Stomach (tissue), 19 donors: ENCODE measurements at regions of chr1 and their contacts with region 1.

Region 1: DNA sequence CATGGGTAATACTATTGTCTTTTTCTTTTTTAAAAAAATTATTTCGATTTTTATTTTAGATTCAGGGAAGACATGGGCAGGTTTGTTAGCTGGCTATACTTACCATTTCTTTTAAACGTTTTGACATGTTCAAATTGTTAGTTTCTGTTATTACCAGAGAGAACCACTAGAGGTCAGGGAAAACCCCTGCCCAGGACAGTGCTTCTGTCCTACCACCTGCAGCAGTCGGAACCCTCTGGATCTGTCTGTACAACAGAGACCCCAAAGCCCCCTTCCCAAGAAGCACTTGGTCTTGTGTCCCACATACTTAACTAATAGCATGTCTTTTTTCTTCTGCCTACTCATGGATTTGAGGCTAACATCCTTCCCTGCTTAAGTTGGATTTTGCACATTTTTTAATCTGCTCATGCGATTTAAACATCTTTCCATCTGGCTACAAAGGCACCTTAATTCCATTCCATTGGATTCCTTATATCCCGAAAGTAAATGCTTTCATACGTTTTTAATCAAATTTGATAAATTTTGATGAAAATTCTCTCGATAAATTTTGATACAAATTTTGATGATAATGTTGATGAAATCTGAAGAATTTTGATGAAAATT is 10.0 kb upstream of the C1orf115 start:
- DNase-seq: peak in 1 of 2 donors; percentile 73
- H3K4me3 ChIP-seq: no peak overlapping the region
- H3K27ac ChIP-seq: no peak overlapping the region
- H3K4me1 ChIP-seq: peaks cover 0 to 12% (median 5%) of the 10 kb centered on the region in 4 donors
- H3K27me3 ChIP-seq: no peaks in the 10 kb centered on the region
- CTCF ChIP-seq: peak in 5 of 7 experiments; percentile 44 to 68 (median 58)
- EP300 ChIP-seq: no peak
- POLR2A ChIP-seq: no peak

Region 2: GRCh38 chr1:220733090-220733601 is 53.0 kb after region 1 on chr1:
- intact Hi-C with region 1: loop called (anchors 10 kb)
- DNase-seq: peak; percentile 73 to 91
- H3K4me3 ChIP-seq: peak overlapping the region in 3 of 4 donors; percentile 5 to 23 (median 6)
- H3K27ac ChIP-seq: peak overlapping the region; percentile 22 to 87 (median 74)
- H3K4me1 ChIP-seq: peaks cover 13 to 30% (median 21%) of the 10 kb centered on the region in 4 donors
- H3K27me3 ChIP-seq: no peaks in the 10 kb centered on the region
- CTCF ChIP-seq: peak in 5 of 7 experiments; percentile 83 to 96 (median 85)
- EP300 ChIP-seq: no peak
- POLR2A ChIP-seq: no peak

Region 3: DNA sequence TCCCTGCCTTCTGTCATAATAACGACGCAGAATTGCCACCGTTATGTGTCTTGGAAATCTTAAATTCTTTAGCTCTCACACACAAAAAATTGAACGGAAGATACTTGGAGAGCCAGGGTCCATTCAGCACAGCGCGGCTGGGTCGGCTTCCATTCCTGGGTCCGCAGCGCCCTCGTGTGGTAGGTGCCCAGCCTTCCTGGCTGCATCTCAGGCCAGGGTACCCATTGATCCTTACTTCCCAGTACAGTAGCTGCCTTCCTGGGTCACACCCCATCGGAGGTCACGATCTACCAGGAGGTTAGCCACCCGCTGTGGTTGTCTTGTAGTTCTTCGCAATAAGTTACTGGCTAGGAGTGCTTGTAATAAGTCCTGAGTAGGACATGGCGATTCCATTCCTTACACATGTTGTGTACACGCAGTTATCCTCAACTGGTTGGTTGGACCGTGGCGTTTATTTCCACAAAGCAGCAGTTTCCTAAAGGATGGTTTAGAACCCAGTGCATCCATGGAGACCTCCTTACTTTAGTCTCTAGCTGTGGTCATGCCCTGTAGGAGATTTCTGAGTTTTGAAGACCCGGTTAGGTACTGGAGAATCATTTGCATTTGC is 96.6 kb after region 1 on chr1:
- intact Hi-C with region 1: loop called (anchors 5 kb)
- DNase-seq: peak; percentile 90 to 92
- H3K4me3 ChIP-seq: no peak overlapping the region
- H3K27ac ChIP-seq: no peak overlapping the region
- H3K4me1 ChIP-seq: peaks cover 0 to 13% (median 6%) of the 10 kb centered on the region in 4 donors
- H3K27me3 ChIP-seq: no peaks in the 10 kb centered on the region
- CTCF ChIP-seq: peak in 5 of 7 experiments; percentile 82 to 95 (median 86)
- EP300 ChIP-seq: no peak
- POLR2A ChIP-seq: no peak